Endothelial cell of umbilical vein (primary cell): ENCODE measurements at regions of chr1 and their contacts with region 1.

Region 1: DNA sequence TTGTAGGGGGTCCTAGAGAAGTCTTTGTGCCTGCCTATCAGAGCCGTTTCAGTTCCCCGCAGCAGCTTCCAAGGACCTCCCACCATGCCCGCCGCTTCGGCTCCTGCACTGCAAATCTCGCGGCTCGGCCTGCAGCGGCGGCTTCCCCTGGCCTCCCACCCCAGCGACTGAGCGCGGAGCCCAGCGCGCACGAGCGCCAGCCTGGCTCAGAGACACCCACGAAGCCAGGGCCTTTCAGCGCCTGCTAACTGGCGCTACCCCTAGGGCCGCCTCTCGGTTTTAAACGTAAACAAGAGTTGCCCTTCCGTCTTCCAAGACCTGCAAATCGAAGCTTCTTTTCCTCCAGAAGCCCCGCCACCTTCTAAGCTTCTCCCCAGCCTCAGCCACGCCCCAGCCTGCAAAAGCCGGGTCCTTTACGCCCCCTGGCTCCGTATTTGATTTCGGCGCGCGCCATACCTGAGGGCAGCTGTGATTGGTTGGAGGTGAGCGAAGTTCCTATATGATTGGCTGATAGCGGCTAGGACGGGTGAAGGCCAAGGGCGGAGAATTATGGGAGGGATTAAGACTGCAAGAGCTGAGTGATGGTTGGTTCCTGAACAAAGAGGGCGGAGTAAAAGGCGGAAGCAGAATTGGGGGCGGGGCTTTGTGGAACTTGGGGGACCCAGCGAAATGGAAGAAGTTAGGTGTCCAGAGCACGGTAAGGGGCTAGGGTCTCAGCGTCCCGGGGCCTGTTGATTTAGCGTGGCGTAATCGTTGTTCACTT is at the start of gene TTF2:
- DNase-seq: peak; percentile 99
- H3K4me3 ChIP-seq: peak within 1 kb of the TSS; percentile 30 to 88 (median 69)
- H3K27ac ChIP-seq: peak within 1 kb of the TSS; percentile 31
- H3K4me1 ChIP-seq: peaks cover 9% of the 10 kb centered on the region
- H3K27me3 ChIP-seq: no peaks in the 10 kb centered on the region
- CTCF ChIP-seq: no peak
- POLR2A ChIP-seq: peak; percentile 42
- total RNA-seq, gene TTF2: 44.1 and 44.4 TPM in 2 replicates

Region 2: GRCh38 chr1:116737020-116737854 is 322.6 kb before region 1 on chr1:
- CTCF ChIA-PET with region 1: interaction called, 91 read pairs
- POLR2A ChIA-PET with region 1: no interaction called
- dilution Hi-C with region 1: no loop called
- intact Hi-C with region 1: loop called (anchors 1 kb)
- DNase-seq: peak; percentile 60
- H3K4me3 ChIP-seq: no peak overlapping the region
- H3K27ac ChIP-seq: no peak overlapping the region
- H3K4me1 ChIP-seq: no peaks in the 10 kb centered on the region
- H3K27me3 ChIP-seq: peaks cover 0 to 2% of the 10 kb centered on the region in 2 experiments
- CTCF ChIP-seq: peak; percentile 77 to 80
- POLR2A ChIP-seq: no peak

Region 3: GRCh38 chr1:116842654-116843053 is 217.2 kb before region 1 on chr1:
- CTCF ChIA-PET with region 1: no interaction called
- POLR2A ChIA-PET with region 1: no interaction called
- dilution Hi-C with region 1: no loop called
- intact Hi-C with region 1: loop called (anchors 1 kb)
- DNase-seq: peak; percentile 20
- H3K4me3 ChIP-seq: no peak overlapping the region
- H3K27ac ChIP-seq: no peak overlapping the region
- H3K4me1 ChIP-seq: peaks cover 2% of the 10 kb centered on the region
- H3K27me3 ChIP-seq: no peaks in the 10 kb centered on the region
- CTCF ChIP-seq: no peak
- POLR2A ChIP-seq: no peak

Region 4: GRCh38 chr1:116909510-116910378 is 150.1 kb before region 1 on chr1 and contains the start of gene PTGFRN:
- CTCF ChIA-PET with region 1: interaction called, 3 read pairs
- POLR2A ChIA-PET with region 1: no interaction called
- dilution Hi-C with region 1: no loop called
- intact Hi-C with region 1: loop called (anchors 2 kb)
- DNase-seq: peak; percentile 62
- H3K4me3 ChIP-seq: peak within 1 kb of the TSS; percentile 51 to 62 (median 56)
- H3K27ac ChIP-seq: peak within 1 kb of the TSS; percentile 3
- H3K4me1 ChIP-seq: no peaks in the 10 kb centered on the region
- H3K27me3 ChIP-seq: no peaks in the 10 kb centered on the region
- CTCF ChIP-seq: no peak
- POLR2A ChIP-seq: no peak
- total RNA-seq, gene PTGFRN: 60.7 and 71.6 TPM in 2 replicates

Region 5: GRCh38 chr1:117367047-117368018 is 307.5 kb after region 1 on chr1 and contains the start of gene MAN1A2:
- CTCF ChIA-PET with region 1: no interaction called
- POLR2A ChIA-PET with region 1: no interaction called
- dilution Hi-C with region 1: no loop called
- intact Hi-C with region 1: loop called (anchors 10 kb)
- DNase-seq: peak; percentile 83
- H3K4me3 ChIP-seq: peak within 1 kb of the TSS; percentile 92 to 96 (median 96)
- H3K27ac ChIP-seq: peak within 1 kb of the TSS; percentile 66
- H3K4me1 ChIP-seq: peaks cover 33% of the 10 kb centered on the region
- H3K27me3 ChIP-seq: no peaks in the 10 kb centered on the region
- CTCF ChIP-seq: no peak
- POLR2A ChIP-seq: peak; percentile 49
- total RNA-seq, gene MAN1A2: 36.2 and 38.3 TPM in 2 replicates

Region 6: GRCh38 chr1:117572546-117572945 is 512.7 kb after region 1 on chr1:
- CTCF ChIA-PET with region 1: no interaction called
- POLR2A ChIA-PET with region 1: no interaction called
- dilution Hi-C with region 1: no loop called
- intact Hi-C with region 1: no loop called
- DNase-seq: no peak
- H3K4me3 ChIP-seq: no peak overlapping the region
- H3K27ac ChIP-seq: no peak overlapping the region
- H3K4me1 ChIP-seq: no peaks in the 10 kb centered on the region
- H3K27me3 ChIP-seq: peaks cover 3 to 4% of the 10 kb centered on the region in 2 experiments
- CTCF ChIP-seq: no peak
- POLR2A ChIP-seq: no peak

Region 7: DNA sequence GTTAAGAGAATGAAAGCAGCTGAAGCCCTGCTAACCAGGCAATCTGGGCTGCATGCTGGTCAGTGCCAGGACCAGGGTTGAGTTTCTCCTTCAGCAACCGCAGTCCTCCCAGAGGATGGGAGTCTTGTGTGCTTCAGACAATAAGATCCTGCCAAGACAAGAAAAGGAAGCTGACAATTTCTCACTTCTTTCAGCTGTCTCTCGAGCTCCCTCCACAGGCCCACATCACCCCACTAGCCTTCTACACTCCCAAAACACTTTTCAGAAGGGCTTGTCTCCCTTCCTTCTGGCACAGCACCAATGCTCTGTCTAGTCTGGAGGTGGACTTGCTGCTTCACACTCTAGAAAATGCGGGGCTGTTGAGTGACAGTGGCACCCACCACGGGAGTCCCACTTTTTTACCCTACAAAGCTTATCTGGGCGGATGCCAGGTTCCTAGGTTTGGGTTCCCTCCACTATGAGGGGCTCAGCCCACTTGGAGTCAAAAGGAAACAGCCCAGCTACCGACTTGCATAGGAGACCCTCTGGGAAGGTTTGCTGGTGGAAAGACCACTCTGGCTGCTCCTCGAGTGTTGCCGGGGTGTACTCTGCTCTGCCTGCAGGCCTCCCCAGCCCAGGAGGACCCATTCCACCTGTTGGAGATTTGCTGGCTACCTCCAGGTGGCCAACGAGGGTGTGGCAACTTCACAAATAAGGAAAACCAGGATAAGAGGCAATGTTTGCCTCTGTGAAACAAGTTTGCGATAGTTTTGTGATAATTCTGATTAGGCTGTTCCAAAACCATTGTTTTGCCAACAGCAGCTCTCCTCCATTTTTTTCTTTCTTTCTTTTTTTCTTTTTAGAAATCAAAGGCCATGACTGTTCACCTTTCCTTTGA is 614.9 kb after region 1 on chr1:
- CTCF ChIA-PET with region 1: no interaction called
- POLR2A ChIA-PET with region 1: no interaction called
- dilution Hi-C with region 1: no loop called
- intact Hi-C with region 1: loop called (anchors 10 kb)
- DNase-seq: no peak
- H3K4me3 ChIP-seq: no peak overlapping the region
- H3K27ac ChIP-seq: no peak overlapping the region
- H3K4me1 ChIP-seq: peaks cover 14% of the 10 kb centered on the region
- H3K27me3 ChIP-seq: no peaks in the 10 kb centered on the region
- CTCF ChIP-seq: no peak
- POLR2A ChIP-seq: no peak